Activated CD4-positive, alpha-beta T cell treated with anti-CD3 and anti-CD28 coated beads for 36 hours (primary cell): ENCODE measurements at regions of chr11 and their contacts with region 1.

Region 1: GRCh38 chr11:58654079-58654907 is 31.8 kb downstream of the CNTF start:
- DNase-seq: peak; percentile 90
- ATAC-seq: peak; percentile 87
- H3K4me3 Mint-ChIP-seq: no peak overlapping the region
- H3K27ac Mint-ChIP-seq: peak overlapping the region; percentile 62
- H3K4me1 Mint-ChIP-seq: peaks cover 20% of the 10 kb centered on the region
- H3K27me3 Mint-ChIP-seq: no peaks in the 10 kb centered on the region

Region 2: GRCh38 chr11:58127342-58127741 is 527.0 kb before region 1 on chr11:
- CTCF ChIA-PET with region 1: no interaction called
- POLR2A ChIA-PET with region 1: no interaction called
- intact Hi-C with region 1: no loop called
- DNase-seq: no peak
- ATAC-seq: no peak
- H3K4me3 Mint-ChIP-seq: no peak overlapping the region
- H3K27ac Mint-ChIP-seq: no peak overlapping the region
- H3K4me1 Mint-ChIP-seq: no peaks in the 10 kb centered on the region
- H3K27me3 Mint-ChIP-seq: peaks cover 6% of the 10 kb centered on the region

Region 3: DNA sequence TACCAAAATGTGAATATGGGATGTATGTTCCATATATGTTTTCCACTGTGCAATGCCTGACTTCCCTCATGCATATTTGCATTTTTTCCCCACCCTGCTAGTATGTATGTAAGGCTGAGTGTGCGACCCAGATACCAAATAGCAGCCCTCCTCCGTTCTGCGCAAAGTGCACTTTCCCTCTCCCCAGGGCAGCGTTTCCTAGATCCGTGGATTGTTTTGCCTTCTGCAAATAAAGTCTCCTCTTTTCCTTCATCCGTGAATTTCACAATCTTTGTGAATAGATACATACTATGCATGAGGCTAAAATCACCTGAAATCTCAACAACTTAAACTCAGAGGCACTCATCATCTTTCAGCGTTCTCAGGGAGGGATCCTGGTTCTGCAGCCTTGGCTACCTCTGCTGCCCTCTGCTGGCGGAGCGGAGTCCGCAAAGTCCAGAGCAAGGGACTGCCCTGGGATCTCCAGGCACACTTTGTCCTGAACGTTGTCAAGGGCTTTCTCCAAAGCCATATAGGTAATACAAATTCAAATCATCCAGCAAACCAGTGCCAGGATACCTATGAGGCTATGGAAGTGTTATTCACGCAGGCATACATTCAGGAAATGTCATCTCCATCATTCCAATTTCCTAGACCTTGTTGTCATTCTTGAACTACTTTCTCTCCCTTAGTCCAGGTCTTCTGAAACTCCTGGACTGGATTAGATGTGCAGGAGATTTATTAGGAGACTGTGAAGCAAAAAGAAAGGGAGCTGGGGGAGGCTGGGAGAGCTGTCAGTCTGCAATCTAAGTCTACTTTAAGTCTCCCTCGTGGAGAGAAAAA is 21.3 kb after region 1 on chr11:
- CTCF ChIA-PET with region 1: interaction called, 11 read pairs
- POLR2A ChIA-PET with region 1: interaction called, 3 read pairs
- intact Hi-C with region 1: loop called (anchors 1 kb)
- DNase-seq: peak; percentile 88
- ATAC-seq: peak; percentile 94
- H3K4me3 Mint-ChIP-seq: no peak overlapping the region
- H3K27ac Mint-ChIP-seq: no peak overlapping the region
- H3K4me1 Mint-ChIP-seq: no peaks in the 10 kb centered on the region
- H3K27me3 Mint-ChIP-seq: no peaks in the 10 kb centered on the region

Region 4: GRCh38 chr11:58788355-58789023 is 134.2 kb after region 1 on chr11:
- CTCF ChIA-PET with region 1: interaction called, 11 read pairs
- POLR2A ChIA-PET with region 1: no interaction called
- intact Hi-C with region 1: loop called (anchors 1 kb)
- DNase-seq: peak; percentile 58
- ATAC-seq: peak; percentile 87
- H3K4me3 Mint-ChIP-seq: no peak overlapping the region
- H3K27ac Mint-ChIP-seq: no peak overlapping the region
- H3K4me1 Mint-ChIP-seq: no peaks in the 10 kb centered on the region
- H3K27me3 Mint-ChIP-seq: peaks cover 4% of the 10 kb centered on the region

Region 5: DNA sequence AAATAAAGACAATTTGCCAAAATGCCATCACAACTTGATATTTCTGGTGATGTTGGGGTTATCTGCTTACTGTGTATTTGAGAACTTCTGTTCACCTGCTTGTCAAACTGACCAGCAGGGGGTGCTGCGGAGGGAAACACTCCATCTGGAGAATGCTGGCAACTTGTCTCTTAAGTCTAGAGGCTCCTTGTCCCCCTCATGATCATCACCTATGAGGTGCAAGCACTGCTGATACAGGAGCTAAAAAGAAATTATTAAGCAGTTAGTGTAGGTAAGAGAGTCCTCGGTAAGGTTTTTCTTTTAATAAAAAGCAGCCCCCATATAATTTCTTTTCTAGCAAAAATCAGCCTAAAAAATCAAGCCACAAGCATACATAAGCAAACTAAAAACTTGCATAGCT is 399.1 kb after region 1 on chr11:
- CTCF ChIA-PET with region 1: interaction called, 5 read pairs
- POLR2A ChIA-PET with region 1: no interaction called
- intact Hi-C with region 1: loop called (anchors 2 to 10 kb)
- DNase-seq: peak; percentile 89
- ATAC-seq: peak; percentile 75
- H3K4me3 Mint-ChIP-seq: no peak overlapping the region
- H3K27ac Mint-ChIP-seq: no peak overlapping the region
- H3K4me1 Mint-ChIP-seq: peaks cover 6% of the 10 kb centered on the region
- H3K27me3 Mint-ChIP-seq: peaks cover 9% of the 10 kb centered on the region